BJ (cell line): ENCODE measurements at regions of chr1 and their contacts with region 1.

Region 1: GRCh38 chr1:169809370-169810095 is 14.8 kb upstream of the METTL18 start:
- DNase-seq: no peak
- H3K4me3 ChIP-seq: no peak overlapping the region
- H3K27me3 ChIP-seq: no peaks in the 10 kb centered on the region
- CTCF ChIP-seq: peak; percentile 45

Region 2: DNA sequence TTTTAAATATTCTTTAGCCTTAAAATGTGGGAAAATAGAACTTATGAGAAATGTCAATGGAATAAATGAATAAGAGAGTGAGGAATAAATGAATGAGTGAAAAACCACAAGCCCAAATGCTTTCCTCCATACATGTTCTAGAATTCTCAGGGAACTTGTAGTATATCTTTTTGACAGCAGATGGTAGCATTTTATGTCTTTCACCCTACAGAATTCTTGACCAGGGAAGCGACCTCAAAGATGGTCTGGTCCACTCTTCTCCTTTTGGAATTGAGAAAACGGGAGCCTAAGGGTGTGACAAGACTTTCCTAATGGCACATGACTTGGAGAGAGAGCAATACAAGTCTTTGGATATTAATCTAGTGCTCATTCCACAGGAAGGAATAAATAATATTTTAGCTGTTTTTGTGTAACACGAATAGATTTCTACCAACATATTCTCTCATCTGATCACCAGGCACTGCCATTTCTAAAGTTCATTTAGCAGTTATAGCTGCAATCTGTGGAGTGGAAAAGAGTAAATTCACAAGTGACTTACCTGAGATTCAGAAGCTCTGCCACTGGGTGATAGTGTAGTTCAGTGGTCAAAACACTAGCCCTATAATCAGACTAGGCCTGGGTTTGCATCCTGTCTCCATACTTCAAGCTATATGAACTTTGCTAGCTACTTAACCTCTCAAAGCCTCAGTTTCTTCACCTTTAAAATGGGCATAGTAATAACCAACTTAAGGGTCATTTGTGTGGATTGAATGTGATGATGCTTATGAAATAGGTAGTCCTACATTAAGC is 208.2 kb before region 1 on chr1:
- CTCF ChIA-PET with region 1: interaction called, 12 read pairs
- POLR2A ChIA-PET with region 1: no interaction called
- DNase-seq: no peak
- H3K4me3 ChIP-seq: no peak overlapping the region
- H3K27me3 ChIP-seq: no peaks in the 10 kb centered on the region
- CTCF ChIP-seq: peak; percentile 23; the same call in 1 of the 2 replicates

Region 3: GRCh38 chr1:169794530-169795416 is 14.8 kb before region 1 on chr1 and contains the start of gene METTL18:
- CTCF ChIA-PET with region 1: interaction called, 13 read pairs
- POLR2A ChIA-PET with region 1: no interaction called
- DNase-seq: peak; percentile 72
- H3K4me3 ChIP-seq: peak within 1 kb of the TSS; percentile 78
- H3K27me3 ChIP-seq: no peaks in the 10 kb centered on the region
- CTCF ChIP-seq: peak; percentile 61
- polyA plus RNA-seq, gene METTL18: 1.4 and 3.6 TPM in 2 replicates

Region 4: DNA sequence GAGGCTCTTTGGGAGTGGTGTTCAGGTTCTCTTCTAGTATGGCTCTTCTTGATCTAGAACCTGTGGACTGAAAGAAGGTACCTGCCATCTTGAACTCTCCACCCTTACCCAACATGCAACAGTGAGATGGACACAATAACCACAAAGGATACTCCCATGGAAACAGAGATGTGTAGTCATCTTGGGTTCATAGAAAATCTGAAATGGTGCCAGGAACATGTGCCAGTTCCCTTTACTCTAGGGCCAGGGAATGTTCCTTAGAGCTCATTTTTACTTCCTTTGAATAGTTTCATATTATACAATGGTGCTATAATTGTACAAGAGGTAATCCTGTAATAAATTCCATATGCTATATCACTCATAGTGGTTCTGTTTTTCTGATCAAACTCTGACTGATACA is 97.4 kb after region 1 on chr1:
- CTCF ChIA-PET with region 1: no interaction called
- POLR2A ChIA-PET with region 1: no interaction called
- DNase-seq: no peak
- H3K4me3 ChIP-seq: no peak overlapping the region
- H3K27me3 ChIP-seq: no peaks in the 10 kb centered on the region
- CTCF ChIP-seq: no peak

Region 5: DNA sequence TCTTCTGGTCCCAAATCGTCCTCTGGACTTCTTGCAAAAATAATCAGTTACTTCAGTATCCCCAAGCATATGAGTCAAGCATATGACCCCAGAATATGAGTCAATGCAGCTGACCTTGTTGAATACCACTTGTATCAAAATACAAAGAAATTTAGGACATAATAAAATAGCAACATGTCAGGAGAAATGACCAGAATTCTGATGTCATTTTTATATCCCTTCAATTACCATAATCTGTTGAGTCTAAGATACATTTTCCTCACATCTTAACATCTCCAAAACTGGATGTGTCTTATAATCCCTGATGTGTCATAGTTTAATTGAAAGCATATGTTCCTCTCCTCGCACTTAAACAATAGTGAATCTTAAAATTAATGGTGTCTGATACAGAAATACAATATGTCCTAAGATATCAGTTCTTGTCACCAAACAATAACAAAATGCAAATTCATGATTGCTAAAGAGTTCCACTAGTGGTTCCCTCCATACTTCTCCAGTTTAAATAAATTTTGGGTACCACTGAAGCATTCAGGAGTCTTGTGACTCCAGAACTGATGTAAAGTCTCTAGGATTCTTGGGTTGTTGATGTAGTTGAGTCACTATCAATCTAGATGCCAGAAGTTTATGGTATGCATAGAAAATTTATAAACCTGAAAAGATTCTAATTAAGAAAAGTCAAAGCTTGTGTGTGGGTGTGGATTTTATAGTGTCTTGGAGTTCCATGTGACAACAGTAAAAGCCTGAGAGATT is 223.2 kb after region 1 on chr1:
- CTCF ChIA-PET with region 1: no interaction called
- POLR2A ChIA-PET with region 1: no interaction called
- DNase-seq: peak; percentile 39
- H3K4me3 ChIP-seq: no peak overlapping the region
- H3K27me3 ChIP-seq: no peaks in the 10 kb centered on the region
- CTCF ChIP-seq: no peak